A549 (cell line): ENCODE measurements at regions of chr9 and their contacts with region 1.

Region 1: GRCh38 chr9:96566498-96567207 is 53.0 kb downstream of the CDC14B start:
- DNase-seq: peak; percentile 71 to 77
- ATAC-seq: peak; percentile 89 to 91
- H3K4me3 ChIP-seq: peak overlapping the region; percentile 64
- H3K27ac ChIP-seq: peak overlapping the region; percentile 87 to 98
- H3K4me1 ChIP-seq: peaks cover 16% of the 10 kb centered on the region
- CTCF ChIP-seq: peak; percentile 70
- EP300 ChIP-seq: no peak
- POLR2A ChIP-seq: peak; percentile 20; the same call in 1 of the 2 replicates
- RAD21 ChIP-seq: peak; percentile 15 to 53; a peak in 4 of 5 replicates

Region 2: DNA sequence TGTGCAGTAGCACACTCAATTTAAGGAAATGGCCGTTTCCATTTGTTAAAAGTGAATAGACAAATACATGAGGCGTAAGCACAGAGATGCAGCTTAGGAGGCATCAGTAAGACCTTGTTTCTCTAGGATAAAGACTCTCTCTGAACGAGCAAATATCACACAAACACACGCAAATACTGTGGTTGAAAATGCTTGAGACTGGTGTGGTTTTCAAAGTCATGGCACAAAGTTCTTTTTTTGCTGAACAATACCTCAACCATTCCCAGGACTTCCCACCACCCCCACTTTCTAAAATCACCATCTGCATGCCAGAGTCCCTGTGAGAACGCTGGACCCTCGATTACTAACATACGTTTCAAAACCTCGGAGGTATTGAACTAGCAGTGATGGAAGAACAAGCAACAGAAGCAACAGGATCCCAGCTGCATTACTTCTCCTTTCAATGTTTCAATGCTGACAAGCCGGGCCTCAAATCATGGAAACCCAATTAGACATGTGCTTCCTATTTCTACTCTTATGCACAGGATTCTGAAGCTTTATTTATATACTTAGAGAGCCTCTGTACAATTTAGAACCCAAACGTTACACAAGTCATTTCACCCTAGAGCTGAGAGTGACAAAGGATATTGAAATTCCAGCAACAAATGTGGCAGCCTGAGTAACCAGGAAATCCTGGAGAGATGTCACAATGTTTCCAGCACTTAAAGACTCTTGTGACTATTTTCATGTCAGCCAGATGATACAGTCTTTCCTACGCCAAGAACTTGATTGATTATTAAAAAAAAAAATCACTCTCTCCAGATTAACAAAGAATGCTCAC is 10.9 kb before region 1 on chr9:
- CTCF ChIA-PET with region 1: interaction called, 15 read pairs
- POLR2A ChIA-PET with region 1: no interaction called
- DNase-seq: no peak
- ATAC-seq: no peak
- H3K4me3 ChIP-seq: no peak overlapping the region
- H3K27ac ChIP-seq: no peak overlapping the region
- H3K4me1 ChIP-seq: peaks cover 10% of the 10 kb centered on the region; the same call in 2 of the 3 replicates
- CTCF ChIP-seq: no peak
- EP300 ChIP-seq: no peak
- POLR2A ChIP-seq: no peak
- RAD21 ChIP-seq: no peak

Region 3: GRCh38 chr9:97559111-97559514 is 992.5 kb after region 1 on chr9:
- CTCF ChIA-PET with region 1: no interaction called
- POLR2A ChIA-PET with region 1: no interaction called
- DNase-seq: no peak
- ATAC-seq: no peak
- H3K4me3 ChIP-seq: no peak overlapping the region
- H3K27ac ChIP-seq: no peak overlapping the region
- H3K4me1 ChIP-seq: peaks cover 4% of the 10 kb centered on the region; the same call in 2 of the 3 replicates
- CTCF ChIP-seq: no peak
- EP300 ChIP-seq: no peak
- POLR2A ChIP-seq: no peak
- RAD21 ChIP-seq: no peak